ENCODE measurements at regions of chr16 and their contacts with region 1.

Region 1: DNA sequence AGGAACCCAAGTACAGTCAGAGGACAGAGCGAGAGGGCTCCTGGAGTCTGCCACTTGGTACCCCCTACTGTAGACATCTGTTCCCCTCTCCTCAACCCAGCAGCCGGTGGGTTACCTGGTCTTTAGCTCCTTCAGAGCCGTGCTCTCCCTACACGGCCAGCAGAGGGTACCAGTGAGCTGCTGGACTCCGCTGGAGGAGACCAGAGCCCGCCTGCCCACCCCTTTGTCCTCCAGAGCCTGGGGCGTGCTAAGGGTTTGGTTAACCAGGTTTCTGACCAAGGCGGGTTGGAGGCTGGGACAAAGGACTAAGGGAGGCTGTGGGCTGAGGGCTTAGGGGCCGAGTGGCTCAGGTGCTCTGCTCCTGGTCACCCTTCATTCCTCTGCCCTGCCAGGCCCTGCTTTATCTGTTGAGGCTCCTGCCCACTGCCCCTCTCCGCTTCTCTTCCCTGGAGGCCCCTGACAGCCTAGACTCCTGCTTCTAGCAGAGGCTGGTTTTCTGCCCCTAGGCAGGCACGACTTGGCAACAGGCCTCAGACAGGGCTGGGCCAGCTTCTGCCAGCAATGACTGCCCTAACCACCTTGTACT is 2.7 kb upstream of the HSD11B2 start:
- DNase-seq: peak; percentile 91
- ATAC-seq: peak; percentile 67
- H3K4me3 Mint-ChIP-seq: no peak overlapping the region
- H3K27ac Mint-ChIP-seq: no peak overlapping the region
- H3K4me1 Mint-ChIP-seq: peaks cover 77% of the 10 kb centered on the region
- H3K27me3 Mint-ChIP-seq: peaks cover 12% of the 10 kb centered on the region
- CTCF ChIP-seq: peak; percentile 80

Region 2: GRCh38 chr16:67393035-67393787 is 35.0 kb before region 1 on chr16 and contains the start of gene TPPP3:
- CTCF ChIA-PET with region 1: interaction called, 103 read pairs
- POLR2A ChIA-PET with region 1: interaction called, 4 read pairs
- DNase-seq: peak; percentile 90
- ATAC-seq: peak; percentile 56
- H3K4me3 Mint-ChIP-seq: peak within 1 kb of the TSS; percentile 66
- H3K27ac Mint-ChIP-seq: no peak within 1 kb of the TSS
- H3K4me1 Mint-ChIP-seq: peaks cover 20% of the 10 kb centered on the region
- H3K27me3 Mint-ChIP-seq: peaks cover 56% of the 10 kb centered on the region
- CTCF ChIP-seq: peak; percentile 25; the same call in 1 of the 2 replicates
- total RNA-seq, gene TPPP3: 0.57 to 0.74 TPM (median 0.64 TPM) in 3 replicates

Region 3: GRCh38 chr16:67415872-67416793 is 12.1 kb before region 1 on chr16 and contains the start of gene ZDHHC1:
- CTCF ChIA-PET with region 1: interaction called, 31 read pairs
- POLR2A ChIA-PET with region 1: interaction called, 3 read pairs
- DNase-seq: peak; percentile 83
- ATAC-seq: peak; percentile 89
- H3K4me3 Mint-ChIP-seq: peak within 1 kb of the TSS; percentile 73
- H3K27ac Mint-ChIP-seq: peak within 1 kb of the TSS; percentile 77
- H3K4me1 Mint-ChIP-seq: peaks cover 33% of the 10 kb centered on the region
- H3K27me3 Mint-ChIP-seq: peaks cover 20% of the 10 kb centered on the region
- CTCF ChIP-seq: no peak
- total RNA-seq, gene ZDHHC1: 4.2 to 4.9 TPM (median 4.6 TPM) in 3 replicates

Region 4: DNA sequence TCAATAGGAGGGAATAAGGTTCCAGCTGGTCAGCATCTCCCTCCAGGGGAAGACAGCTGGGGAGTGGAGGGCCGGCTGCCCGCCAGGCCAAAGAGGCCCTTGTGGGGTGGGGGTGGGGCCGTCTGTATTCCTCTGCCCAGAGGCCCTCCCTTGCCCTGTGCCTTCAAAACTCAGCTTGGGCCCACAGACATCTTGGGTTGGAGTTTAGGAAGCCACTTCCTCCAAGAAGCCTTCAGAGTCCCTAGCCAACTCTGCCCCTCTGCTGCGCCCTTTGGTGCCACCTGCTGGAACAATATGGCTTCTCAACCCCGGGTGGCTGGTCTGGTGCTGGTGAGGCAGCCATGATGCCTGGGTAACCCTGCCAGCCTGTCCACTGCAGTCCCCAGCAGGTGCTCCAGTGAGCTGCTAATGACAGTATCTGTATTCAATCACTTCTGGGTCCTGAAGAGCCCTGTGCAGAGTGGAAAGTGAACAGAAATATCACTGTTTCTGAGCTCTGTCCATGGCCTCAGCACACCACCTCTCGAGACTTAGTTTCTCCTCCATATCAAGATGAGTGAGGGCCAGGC is 19.4 kb after region 1 on chr16:
- CTCF ChIA-PET with region 1: interaction called, 234 read pairs
- POLR2A ChIA-PET with region 1: interaction called, 5 read pairs
- DNase-seq: peak; percentile 62
- ATAC-seq: no peak; the same call in 1 of the 2 replicates
- H3K4me3 Mint-ChIP-seq: no peak overlapping the region
- H3K27ac Mint-ChIP-seq: no peak overlapping the region
- H3K4me1 Mint-ChIP-seq: peaks cover 6% of the 10 kb centered on the region
- H3K27me3 Mint-ChIP-seq: no peaks in the 10 kb centered on the region; the same call in 1 of the 2 replicates
- CTCF ChIP-seq: 0 out of 2 replicates have a peak, but pooled peaks have one; percentile 16

Region 5: GRCh38 chr16:67461600-67462592 is 33.7 kb after region 1 on chr16:
- CTCF ChIA-PET with region 1: interaction called, 48 read pairs
- POLR2A ChIA-PET with region 1: no interaction called
- DNase-seq: no peak
- ATAC-seq: no peak
- H3K4me3 Mint-ChIP-seq: no peak overlapping the region
- H3K27ac Mint-ChIP-seq: no peak overlapping the region
- H3K4me1 Mint-ChIP-seq: peaks cover 10% of the 10 kb centered on the region
- H3K27me3 Mint-ChIP-seq: no peaks in the 10 kb centered on the region
- CTCF ChIP-seq: no peak

Region 6: DNA sequence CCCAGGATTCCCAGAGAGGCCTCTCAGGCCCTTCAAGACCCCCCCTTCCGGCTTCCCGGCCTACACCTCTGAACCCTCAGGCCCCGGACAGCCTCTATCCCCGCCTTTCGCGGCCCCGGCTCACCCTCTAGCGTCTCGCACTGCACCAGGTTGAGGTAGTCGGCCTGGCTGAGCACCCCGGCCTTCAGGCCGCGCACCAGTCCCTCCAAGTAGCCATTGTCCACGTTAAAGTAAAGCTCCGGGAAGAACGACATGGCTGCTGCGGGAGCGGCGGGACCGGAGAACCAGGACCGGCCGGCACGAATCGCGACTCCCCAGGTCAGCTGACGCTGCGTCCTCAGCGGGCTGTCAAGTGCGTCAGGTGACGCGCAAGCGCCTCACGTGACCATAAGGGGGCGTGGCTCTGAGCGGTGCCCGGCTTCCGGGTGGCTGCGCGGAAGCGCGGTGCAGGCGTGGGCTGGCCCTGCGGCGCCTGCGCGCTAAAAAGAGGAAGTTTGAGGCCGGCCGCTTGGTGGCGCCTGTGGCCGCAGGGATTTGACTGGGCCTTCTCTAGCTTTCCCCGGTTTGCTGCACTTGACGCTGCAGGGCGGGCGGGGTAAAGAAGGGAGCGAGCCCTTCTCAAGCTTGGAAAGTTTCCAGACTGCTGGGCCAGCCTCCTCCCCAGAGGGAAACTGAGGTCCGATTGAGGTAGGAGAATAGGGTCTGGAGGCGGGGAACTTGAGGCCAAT is 52.8 kb after region 1 on chr16 and contains the start of gene ATP6V0D1:
- CTCF ChIA-PET with region 1: interaction called, 13 read pairs
- POLR2A ChIA-PET with region 1: interaction called, 4 read pairs
- DNase-seq: peak; percentile 99
- ATAC-seq: peak; percentile 95
- H3K4me3 Mint-ChIP-seq: peak within 1 kb of the TSS; percentile 98
- H3K27ac Mint-ChIP-seq: peak within 1 kb of the TSS; percentile 97
- H3K4me1 Mint-ChIP-seq: peaks cover 5% of the 10 kb centered on the region
- H3K27me3 Mint-ChIP-seq: peaks cover 36% of the 10 kb centered on the region
- CTCF ChIP-seq: peak; percentile 49; the same call in 1 of the 2 replicates
- total RNA-seq, gene ATP6V0D1: 32.5 to 44.1 TPM (median 33.8 TPM) in 3 replicates

Measured in WTC11 (cell line).